Ovary (tissue), 10 donors: ENCODE measurements at regions of chr19 and their contacts with region 1.

Region 1: DNA sequence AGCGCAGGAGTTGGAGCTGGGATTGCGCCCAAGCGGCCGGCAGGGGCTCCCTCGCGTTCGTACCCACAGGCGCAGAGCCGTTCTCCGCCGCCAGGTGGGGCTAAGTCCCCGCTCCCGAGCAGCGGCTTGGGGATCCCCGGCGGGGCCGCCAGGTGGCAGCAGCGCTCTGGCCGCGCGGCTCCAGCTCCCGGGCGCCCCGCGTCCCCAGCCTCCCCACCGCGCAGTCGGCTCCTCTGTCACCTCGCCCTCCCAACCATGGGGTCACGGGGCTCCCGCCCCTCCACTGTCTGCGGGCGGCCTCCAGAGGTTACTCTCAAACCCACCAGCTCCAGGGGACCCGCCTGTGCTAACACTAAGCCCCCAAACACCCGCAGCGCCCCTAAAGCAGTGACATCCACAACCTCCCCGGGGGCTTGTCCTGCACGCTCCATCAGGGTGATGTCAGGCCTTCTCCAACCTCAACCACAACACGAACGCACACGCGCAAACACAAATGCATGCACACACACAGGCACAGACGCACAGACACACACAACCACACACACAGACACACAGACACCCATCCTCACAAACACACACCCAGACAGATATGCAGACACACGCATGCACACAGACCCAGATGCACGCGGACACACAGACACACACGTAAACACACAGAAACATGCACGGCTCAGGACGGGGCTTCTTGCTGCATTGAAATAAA is 18.4 kb upstream of the KCTD15 start:
- DNase-seq: peak; percentile 72 to 92 (median 87)
- H3K4me3 ChIP-seq: no peak overlapping the region
- H3K27ac ChIP-seq: no peak overlapping the region
- H3K4me1 ChIP-seq: peaks cover 6% of the 10 kb centered on the region
- H3K27me3 ChIP-seq: no peaks in the 10 kb centered on the region
- CTCF ChIP-seq: peak; percentile 100
- EP300 ChIP-seq: no peak
- POLR2A ChIP-seq: peak; percentile 16

Region 2: DNA sequence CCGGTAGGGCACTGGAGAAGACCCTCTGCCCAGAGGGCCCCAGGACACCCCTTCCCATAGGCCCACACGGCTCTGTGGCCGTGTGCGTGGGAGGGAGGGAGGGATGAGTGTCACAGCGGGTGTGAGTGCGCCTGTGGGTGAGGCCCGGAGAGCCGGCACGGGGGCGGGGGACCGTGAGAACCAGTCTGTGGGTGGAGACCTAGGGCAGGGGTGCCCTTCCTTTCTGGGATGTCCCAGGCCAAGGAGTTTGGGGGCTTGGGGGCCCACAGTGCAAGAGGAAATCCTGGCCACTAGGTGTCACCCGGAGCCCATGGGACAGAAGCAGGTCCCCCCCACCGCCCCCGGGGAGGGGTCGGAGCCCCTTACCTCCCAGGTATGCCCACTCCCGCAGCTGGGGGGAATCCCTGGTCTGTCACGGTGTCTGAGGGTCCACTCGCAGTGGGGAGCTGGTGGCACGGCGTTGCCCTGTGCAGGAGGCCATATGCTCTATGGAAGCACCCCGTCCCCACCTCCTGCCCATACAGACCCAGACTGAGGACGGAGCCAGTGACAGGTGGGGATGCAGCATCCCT is 536.6 kb before region 1 on chr19:
- intact Hi-C with region 1: loop called in 3 of 4 experiments (anchors 5 to 10 kb)
- DNase-seq: no peak
- H3K4me3 ChIP-seq: no peak overlapping the region
- H3K27ac ChIP-seq: no peak overlapping the region
- H3K4me1 ChIP-seq: no peaks in the 10 kb centered on the region
- H3K27me3 ChIP-seq: no peaks in the 10 kb centered on the region
- CTCF ChIP-seq: peak; percentile 13 to 46 (median 21)
- EP300 ChIP-seq: no peak
- POLR2A ChIP-seq: no peak

Region 3: GRCh38 chr19:33430674-33431277 is 347.5 kb before region 1 on chr19:
- intact Hi-C with region 1: loop called in 3 of 4 experiments (anchors 5 to 10 kb)
- DNase-seq: peak in 4 of 5 donors; percentile 43 to 74 (median 54)
- H3K4me3 ChIP-seq: no peak overlapping the region
- H3K27ac ChIP-seq: no peak overlapping the region
- H3K4me1 ChIP-seq: no peaks in the 10 kb centered on the region
- H3K27me3 ChIP-seq: no peaks in the 10 kb centered on the region
- CTCF ChIP-seq: peak in 1 of 3 donors; percentile 17
- EP300 ChIP-seq: no peak
- POLR2A ChIP-seq: no peak

Region 4: GRCh38 chr19:33998739-33999345 is 220.6 kb after region 1 on chr19:
- intact Hi-C with region 1: loop called (anchors 2 to 5 kb)
- DNase-seq: no peak
- H3K4me3 ChIP-seq: no peak overlapping the region
- H3K27ac ChIP-seq: no peak overlapping the region
- H3K4me1 ChIP-seq: no peaks in the 10 kb centered on the region
- H3K27me3 ChIP-seq: no peaks in the 10 kb centered on the region
- CTCF ChIP-seq: peak in 1 of 3 donors; percentile 38
- EP300 ChIP-seq: no peak
- POLR2A ChIP-seq: no peak

Region 5: DNA sequence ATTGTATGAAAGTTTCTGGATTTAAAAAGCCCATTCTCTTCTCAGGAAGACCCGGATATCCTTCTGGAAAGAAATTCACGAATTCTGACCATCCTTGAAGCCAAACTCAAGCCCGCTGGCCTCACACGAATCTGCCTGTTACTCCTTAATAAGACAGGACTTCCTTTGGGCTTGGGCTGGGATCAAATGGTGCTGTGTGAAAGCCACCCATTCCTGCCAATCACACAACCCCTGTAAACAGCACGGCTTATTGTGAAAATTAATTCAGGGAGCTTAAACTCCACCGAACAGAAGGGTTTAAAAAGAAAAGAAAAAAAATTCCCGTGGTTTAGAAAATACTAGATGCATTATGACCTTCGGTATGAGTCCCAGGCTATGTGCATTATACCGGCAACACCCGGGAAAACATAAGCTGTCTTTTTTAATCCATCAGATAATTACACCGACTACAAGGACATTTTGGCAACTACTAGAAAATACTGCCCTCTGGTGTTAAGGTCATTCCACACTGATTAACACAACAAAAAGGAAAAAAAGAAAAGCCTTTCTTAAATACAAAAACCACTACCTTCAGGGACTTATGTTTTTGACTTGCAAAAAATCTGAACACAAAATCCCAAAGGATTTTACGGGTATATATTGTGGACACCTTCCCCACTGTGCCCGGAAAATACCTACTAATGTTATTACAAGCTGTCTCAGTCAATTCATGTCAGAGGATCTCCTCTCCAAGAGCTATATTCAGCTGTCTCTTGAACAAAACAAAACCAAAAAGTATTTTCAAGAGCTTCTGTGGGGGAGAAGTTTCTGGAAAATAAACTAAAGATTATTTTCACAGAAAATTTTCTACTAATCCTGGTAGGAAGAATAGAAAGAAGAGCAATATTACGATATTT is 318.0 kb after region 1 on chr19:
- intact Hi-C with region 1: loop called (anchors 5 kb)
- DNase-seq: no peak
- H3K4me3 ChIP-seq: no peak overlapping the region
- H3K27ac ChIP-seq: no peak overlapping the region
- H3K4me1 ChIP-seq: peaks cover 2% of the 10 kb centered on the region
- H3K27me3 ChIP-seq: no peaks in the 10 kb centered on the region
- CTCF ChIP-seq: peak in 2 of 3 donors; percentile 50
- EP300 ChIP-seq: no peak
- POLR2A ChIP-seq: no peak

Region 6: GRCh38 chr19:34145741-34146202 is 367.5 kb after region 1 on chr19:
- intact Hi-C with region 1: loop called (anchors 2 to 10 kb)
- DNase-seq: peak; percentile 20 to 48 (median 42)
- H3K4me3 ChIP-seq: no peak overlapping the region
- H3K27ac ChIP-seq: no peak overlapping the region
- H3K4me1 ChIP-seq: no peaks in the 10 kb centered on the region
- H3K27me3 ChIP-seq: no peaks in the 10 kb centered on the region
- CTCF ChIP-seq: peak; percentile 70 to 72 (median 72)
- EP300 ChIP-seq: no peak
- POLR2A ChIP-seq: no peak